ENCODE measurements at regions of chr3 and their contacts with region 1.

Region 1: GRCh38 chr3:150787741-150788370 is 24.9 kb upstream of the SIAH2 start:
- DNase-seq: peak; percentile 74 to 97 (median 88)

Region 2: DNA sequence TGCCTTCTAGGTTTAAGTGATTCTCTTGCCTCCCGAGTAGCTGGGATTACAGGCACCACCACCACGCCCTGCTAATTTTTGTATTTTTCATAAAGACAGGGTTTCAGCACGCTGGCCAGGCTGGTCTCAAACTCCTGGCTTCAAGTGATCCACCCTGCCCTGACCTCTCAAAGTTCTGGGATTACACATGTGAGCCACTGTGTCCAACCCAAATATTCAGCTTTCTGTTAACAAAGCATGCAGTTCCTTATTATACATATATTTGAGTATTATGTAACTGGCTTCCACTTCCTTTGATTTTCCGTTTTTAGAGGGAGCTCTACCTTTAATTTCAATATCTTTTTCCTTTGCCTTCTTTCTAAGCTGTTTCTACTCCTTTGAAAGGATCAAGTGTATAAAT is 353.6 kb before region 1 on chr3:
- intact Hi-C with region 1: no loop called
- DNase-seq: no peak

Region 3: GRCh38 chr3:150737874-150738713 is 49.8 kb before region 1 on chr3:
- intact Hi-C with region 1: no loop called
- DNase-seq: no peak

Region 4: DNA sequence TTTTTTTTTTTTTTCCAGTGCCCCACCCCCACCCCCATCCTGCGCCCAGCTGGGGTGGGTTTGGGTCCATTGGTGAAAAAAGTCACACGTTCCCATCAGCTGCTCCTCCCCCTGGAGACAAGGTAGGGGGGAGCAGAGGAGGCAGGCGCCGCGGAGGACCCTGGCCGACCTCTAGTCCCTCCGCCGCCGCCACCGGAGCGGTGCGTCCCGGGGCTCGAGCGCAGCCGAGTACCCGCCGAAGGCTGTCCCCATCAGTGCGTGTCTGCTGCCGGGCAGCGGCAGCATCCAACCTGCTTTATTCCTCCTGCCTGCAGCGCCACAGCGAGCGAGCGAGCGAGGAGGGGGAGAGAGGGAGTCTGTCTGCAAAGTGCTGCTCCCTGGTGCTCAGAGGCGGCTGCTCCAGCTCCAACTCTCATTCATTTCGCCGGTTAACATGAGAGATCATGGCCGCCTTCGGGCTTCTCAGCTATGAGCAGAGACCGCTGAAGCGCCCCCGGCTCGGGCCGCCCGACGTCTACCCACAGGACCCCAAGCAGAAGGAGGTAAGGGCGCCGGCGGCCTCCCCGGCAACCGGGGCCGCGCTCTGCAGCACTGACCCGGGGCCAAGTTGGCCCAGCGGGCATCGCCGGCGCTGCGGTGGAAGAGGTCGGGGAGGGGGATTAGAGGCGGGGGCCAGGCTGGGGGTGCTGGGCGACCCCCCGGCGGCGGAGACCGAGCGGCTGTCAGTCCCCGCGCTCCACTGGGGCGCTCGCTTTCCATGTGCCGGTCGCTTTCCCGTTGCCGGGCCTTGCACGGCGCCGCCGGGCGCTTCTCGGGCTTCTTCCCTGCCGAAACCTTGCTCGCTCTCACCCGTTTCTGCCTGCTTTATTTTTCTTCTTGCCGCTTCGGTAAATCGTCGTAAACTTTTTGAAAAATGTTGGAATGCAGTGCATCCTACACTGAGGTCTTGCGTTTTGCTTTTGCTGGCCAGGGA is 298.9 kb after region 1 on chr3:
- intact Hi-C with region 1: loop called (anchors 10 kb)
- DNase-seq: peak; percentile 56 to 94 (median 80)

Region 5: DNA sequence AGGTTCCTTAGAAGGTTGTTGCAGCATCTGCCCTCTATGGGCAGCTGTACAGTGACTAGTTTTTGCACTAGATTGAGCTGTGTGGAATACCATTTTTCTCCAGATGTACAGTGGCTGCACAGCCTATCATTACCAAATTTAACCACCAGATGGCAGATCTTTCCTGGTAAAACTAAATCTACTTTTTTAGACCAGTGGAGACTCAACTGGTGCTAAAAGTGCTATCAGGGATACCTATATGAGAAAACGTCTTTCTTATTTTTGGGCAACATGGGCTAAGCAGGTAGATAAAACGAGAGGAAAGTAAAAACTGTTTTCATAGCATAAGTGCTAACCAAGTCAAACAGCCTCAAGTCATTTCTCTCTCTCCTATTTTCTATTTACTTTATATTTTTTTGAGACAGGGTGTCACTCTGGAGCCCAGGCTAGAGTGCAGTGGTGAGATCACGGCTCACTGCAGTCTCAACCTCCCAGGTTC is 651.8 kb after region 1 on chr3:
- intact Hi-C with region 1: no loop called
- DNase-seq: no peak